ENCODE measurements at regions of chr5 and their contacts with region 1.

Region 1: DNA sequence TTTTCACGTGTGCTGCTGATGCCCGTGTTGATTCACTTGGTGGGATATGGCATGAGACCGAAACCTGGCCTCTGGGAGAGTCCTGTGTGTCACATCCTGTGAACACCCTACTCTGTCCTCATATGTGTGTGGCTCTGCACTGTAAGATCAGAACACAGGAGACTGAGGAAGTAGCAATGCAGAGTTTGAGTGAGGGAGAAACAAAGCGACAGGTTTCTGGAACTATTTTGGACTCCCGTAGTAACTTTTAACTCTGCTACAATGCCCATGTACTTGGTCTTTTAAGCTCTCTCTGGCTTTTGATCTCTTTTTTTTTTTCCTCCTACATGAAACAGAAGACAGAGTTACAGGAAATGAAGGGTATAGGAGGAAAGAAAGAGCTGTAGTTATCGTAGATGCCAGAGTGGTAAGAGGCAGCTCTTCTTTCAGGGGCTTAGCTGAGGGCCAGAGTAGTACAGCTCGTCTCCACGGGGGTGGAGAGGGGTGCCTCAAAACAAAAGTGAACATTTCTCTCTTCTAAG is 26.6 kb downstream of the GRAMD2B start:
- DNase-seq: peak; percentile 79
- ATAC-seq: peak; percentile 93
- H3K4me3 Mint-ChIP-seq: peak overlapping the region; percentile 82
- H3K27ac Mint-ChIP-seq: peak overlapping the region; percentile 100
- H3K4me1 Mint-ChIP-seq: peaks cover 60% of the 10 kb centered on the region
- H3K27me3 Mint-ChIP-seq: no peaks in the 10 kb centered on the region

Region 2: GRCh38 chr5:126395198-126395597 is 54.6 kb before region 1 on chr5:
- CTCF ChIA-PET with region 1: no interaction called
- POLR2A ChIA-PET with region 1: no interaction called
- DNase-seq: no peak
- ATAC-seq: no peak
- H3K4me3 Mint-ChIP-seq: no peak overlapping the region
- H3K27ac Mint-ChIP-seq: no peak overlapping the region
- H3K4me1 Mint-ChIP-seq: no peaks in the 10 kb centered on the region
- H3K27me3 Mint-ChIP-seq: peaks cover 2% of the 10 kb centered on the region

Region 3: DNA sequence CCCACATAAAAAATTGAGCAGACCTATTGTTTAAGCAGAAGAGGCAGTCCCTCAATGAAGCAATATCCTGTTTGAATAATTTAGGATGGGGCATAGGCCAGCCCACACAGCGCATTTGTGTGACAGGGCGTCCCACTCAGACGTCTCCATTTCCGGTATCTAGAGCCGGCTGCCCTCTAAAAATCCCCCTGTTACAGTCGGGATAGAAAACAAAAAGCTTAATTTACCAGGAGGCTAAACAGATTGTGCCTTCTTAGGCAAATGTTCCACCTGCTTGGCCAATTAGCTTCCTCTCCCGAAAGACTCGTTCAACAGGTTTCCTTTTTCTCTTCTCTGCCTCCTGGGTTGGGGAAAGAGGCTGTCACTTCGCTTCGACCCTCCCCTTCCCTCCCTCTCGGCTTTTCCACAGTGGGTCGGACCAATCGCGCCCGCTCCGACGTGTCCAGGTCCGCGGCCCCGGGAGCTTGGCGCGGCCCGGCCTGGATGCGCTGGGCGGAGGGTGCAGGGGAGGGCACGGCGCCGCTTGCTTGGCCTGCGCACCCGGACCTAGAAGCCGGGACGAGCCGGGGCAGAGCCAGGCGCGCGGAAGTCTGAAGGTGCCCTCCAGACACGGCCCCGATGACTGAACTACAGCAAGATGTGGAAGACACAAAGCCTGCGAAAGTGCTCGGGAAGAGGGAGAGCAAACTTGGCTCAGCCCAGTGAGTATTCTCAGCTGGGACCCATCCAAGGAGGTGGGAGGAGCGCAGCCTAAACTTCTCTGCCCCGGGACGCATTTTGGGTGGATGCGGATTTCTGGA is 26.6 kb before region 1 on chr5 and contains the start of gene GRAMD2B:
- CTCF ChIA-PET with region 1: interaction called, 6 read pairs
- POLR2A ChIA-PET with region 1: interaction called, 35 read pairs
- DNase-seq: peak; percentile 79
- ATAC-seq: peak; percentile 88
- H3K4me3 Mint-ChIP-seq: peak within 1 kb of the TSS; percentile 84
- H3K27ac Mint-ChIP-seq: peak within 1 kb of the TSS; percentile 89
- H3K4me1 Mint-ChIP-seq: peaks cover 26% of the 10 kb centered on the region
- H3K27me3 Mint-ChIP-seq: no peaks in the 10 kb centered on the region
- total RNA-seq, gene GRAMD2B: 3.3 to 6.5 TPM

Region 4: GRCh38 chr5:126462239-126463014 is 12.6 kb after region 1 on chr5:
- CTCF ChIA-PET with region 1: interaction called, 4 read pairs
- POLR2A ChIA-PET with region 1: interaction called, 10 read pairs
- DNase-seq: no peak
- ATAC-seq: no peak
- H3K4me3 Mint-ChIP-seq: no peak overlapping the region
- H3K27ac Mint-ChIP-seq: no peak overlapping the region
- H3K4me1 Mint-ChIP-seq: peaks cover 9% of the 10 kb centered on the region
- H3K27me3 Mint-ChIP-seq: no peaks in the 10 kb centered on the region

Measured in activated CD8-positive, alpha-beta T cell treated with anti-CD3 and anti-CD28 coated beads, Interleukin-2, amount 10 ng/mL, durations not matched to agents 7 days and 5 days (primary cell).